ENCODE measurements at regions of chr12 and their contacts with region 1.

Region 1: DNA sequence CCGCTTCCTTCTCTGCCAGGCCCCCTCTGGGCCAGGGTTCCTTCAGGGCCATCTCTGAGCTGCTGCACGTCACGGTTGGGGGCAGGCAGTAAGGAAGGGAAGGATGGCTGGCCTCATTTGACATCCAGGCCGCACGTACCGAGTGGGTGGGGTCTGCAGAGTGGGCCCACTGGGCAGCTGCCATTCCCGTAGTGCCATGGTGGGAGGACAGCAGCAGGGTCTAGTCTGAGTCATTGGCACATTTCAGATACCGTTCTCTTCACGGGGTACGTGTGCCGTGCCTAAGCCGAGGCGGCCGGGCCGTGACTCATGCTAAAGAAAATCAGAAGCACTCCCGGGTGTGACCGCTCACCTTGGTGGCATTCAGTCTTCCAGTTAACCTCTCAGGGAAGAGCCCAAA is 43.9 kb downstream of the IL31 start:
- DNase-seq: peak in 1 of 2 donors; percentile 45
- ATAC-seq: peak; percentile 21 to 59 (median 44)
- H3K4me3 ChIP-seq: no peak overlapping the region
- H3K27ac ChIP-seq: peak overlapping the region; percentile 66
- H3K4me1 ChIP-seq: peaks cover 33% of the 10 kb centered on the region
- H3K27me3 ChIP-seq: no peaks in the 10 kb centered on the region
- CTCF ChIP-seq: no peak

Region 2: GRCh38 chr12:122190842-122191668 is 60.9 kb after region 1 on chr12:
- intact Hi-C with region 1: loop called (anchors 2 kb)
- DNase-seq: peak; percentile 57 to 80
- ATAC-seq: peak; percentile 87 to 96 (median 93)
- H3K4me3 ChIP-seq: no peak overlapping the region
- H3K27ac ChIP-seq: no peak overlapping the region
- H3K4me1 ChIP-seq: no peaks in the 10 kb centered on the region
- H3K27me3 ChIP-seq: no peaks in the 10 kb centered on the region
- CTCF ChIP-seq: peak; percentile 83

Measured in psoas muscle (tissue), 8 donors.